Heart right ventricle (tissue), 16 donors: ENCODE measurements at regions of chr6 and their contacts with region 1.

Region 1: GRCh38 chr6:125966569-125966968 is 10.0 kb downstream of the HINT3 start:
- DNase-seq: no peak
- ATAC-seq: no peak
- H3K4me3 ChIP-seq: no peak overlapping the region
- H3K27ac ChIP-seq: no peak overlapping the region
- H3K4me1 ChIP-seq: peaks cover 0 to 4% (median 0%) of the 10 kb centered on the region in 9 donors
- H3K27me3 ChIP-seq: no peaks in the 10 kb centered on the region
- CTCF ChIP-seq: no peak

Region 2: GRCh38 chr6:125307150-125307838 is 659.3 kb before region 1 on chr6:
- intact Hi-C with region 1: loop called in 7 of 10 experiments (anchors 5 to 10 kb)
- DNase-seq: no peak
- ATAC-seq: no peak
- H3K4me3 ChIP-seq: no peak overlapping the region
- H3K27ac ChIP-seq: no peak overlapping the region
- H3K4me1 ChIP-seq: peaks cover 0 to 4% (median 0%) of the 10 kb centered on the region in 9 donors
- H3K27me3 ChIP-seq: peaks cover 0 to 9% (median 0%) of the 10 kb centered on the region in 7 donors
- CTCF ChIP-seq: no peak

Region 3: GRCh38 chr6:125858427-125859320 is 107.9 kb before region 1 on chr6:
- intact Hi-C with region 1: loop called in 2 of 10 experiments (anchors 5 kb)
- DNase-seq: peak in 1 of 2 donors; percentile 53
- ATAC-seq: peak in 7 of 8 donors; percentile 75 to 90 (median 85)
- H3K4me3 ChIP-seq: no peak overlapping the region
- H3K27ac ChIP-seq: no peak overlapping the region
- H3K4me1 ChIP-seq: peaks cover 0 to 6% (median 2%) of the 10 kb centered on the region in 9 donors
- H3K27me3 ChIP-seq: no peaks in the 10 kb centered on the region
- CTCF ChIP-seq: peak; percentile 26 to 79 (median 68)

Region 4: DNA sequence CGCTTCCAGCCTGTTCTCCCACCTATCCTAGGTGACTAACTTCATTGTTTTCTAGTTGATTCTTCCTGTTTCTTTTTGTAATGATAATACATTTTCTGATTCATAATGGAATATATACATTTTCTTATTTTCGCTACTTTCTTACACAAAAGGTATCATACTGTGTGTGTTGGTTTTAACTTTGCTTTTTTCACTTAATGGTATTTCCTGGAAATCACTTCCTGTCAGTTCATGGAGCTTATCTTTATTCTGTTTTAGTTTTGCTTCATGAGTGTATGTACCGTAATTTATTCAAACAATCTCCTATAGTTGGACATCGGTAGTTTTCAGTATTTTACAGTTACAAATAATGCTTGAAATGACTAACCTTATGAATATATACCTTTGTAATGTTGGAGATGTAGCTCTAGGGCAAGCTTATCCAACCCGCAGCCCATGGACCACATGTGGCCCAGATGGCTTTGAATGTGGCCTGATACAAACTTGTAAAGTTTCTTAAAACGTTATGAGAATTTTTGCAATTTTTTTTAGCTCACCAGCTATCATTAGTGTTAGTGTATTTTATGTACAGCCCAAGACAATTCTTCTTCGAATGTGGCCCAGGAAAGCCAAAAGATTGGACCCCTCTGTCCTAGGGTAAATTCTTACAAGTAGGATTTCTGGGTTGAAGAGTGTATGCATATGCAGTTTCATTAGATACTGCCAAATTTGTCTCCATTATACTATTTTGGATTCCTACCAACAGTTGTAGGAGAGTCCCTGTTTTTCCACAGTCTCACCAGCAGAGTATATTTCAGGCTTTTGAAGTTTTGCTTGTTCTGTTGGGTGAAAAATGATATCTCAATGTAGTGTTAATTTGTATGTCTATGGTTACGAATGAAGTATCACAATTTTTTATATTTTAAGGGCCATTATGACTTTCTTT is 36.4 kb after region 1 on chr6:
- intact Hi-C with region 1: no loop called
- DNase-seq: no peak
- ATAC-seq: no peak
- H3K4me3 ChIP-seq: no peak overlapping the region
- H3K27ac ChIP-seq: no peak overlapping the region
- H3K4me1 ChIP-seq: no peaks in the 10 kb centered on the region
- H3K27me3 ChIP-seq: no peaks in the 10 kb centered on the region
- CTCF ChIP-seq: no peak

Region 5: DNA sequence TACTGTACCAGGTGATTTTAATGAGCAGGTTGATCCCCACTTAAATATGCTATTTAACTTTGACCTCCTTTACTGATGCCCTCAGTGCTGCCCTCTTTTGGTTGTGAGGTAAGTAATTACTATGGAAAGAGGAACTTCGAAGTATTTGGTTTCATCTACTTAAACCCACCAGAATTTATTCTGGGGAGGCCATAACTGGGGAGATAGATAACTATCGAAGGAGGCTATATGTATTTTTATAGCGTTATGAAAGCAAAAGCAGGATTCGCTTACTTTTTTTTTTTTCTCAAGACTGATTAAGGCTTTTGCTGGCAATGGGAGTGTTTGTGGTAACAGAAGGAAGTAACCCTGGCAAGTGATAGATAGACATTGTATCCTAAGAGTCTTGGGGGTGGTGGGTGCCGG is 204.4 kb after region 1 on chr6:
- intact Hi-C with region 1: no loop called
- DNase-seq: no peak
- ATAC-seq: no peak
- H3K4me3 ChIP-seq: no peak overlapping the region
- H3K27ac ChIP-seq: no peak overlapping the region
- H3K4me1 ChIP-seq: peaks cover 0 to 6% (median 0%) of the 10 kb centered on the region in 9 donors
- H3K27me3 ChIP-seq: peaks cover 0 to 20% (median 0%) of the 10 kb centered on the region in 7 donors
- CTCF ChIP-seq: peak in 7 of 9 donors; percentile 15 to 52 (median 36)

Region 6: DNA sequence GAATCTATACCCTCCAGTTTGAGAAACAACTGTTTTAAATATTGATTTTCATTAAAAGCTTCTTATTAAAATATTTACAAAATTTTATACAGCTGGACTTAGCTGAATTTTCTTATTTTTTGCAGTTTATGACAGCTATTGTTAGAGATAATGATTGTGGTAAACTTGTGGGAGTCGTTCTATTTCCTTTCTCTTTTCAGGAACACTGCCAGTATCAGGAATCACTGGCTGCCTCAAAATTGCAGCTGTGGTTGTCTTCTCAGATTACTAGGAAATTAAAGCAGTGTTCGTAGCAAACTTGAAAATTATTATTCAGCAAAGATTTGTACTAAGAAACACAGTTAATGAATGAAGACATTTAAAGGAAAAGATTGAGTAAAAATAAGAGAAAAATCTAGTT is 684.4 kb after region 1 on chr6:
- intact Hi-C with region 1: no loop called
- DNase-seq: no peak
- ATAC-seq: no peak
- H3K4me3 ChIP-seq: no peak overlapping the region
- H3K27ac ChIP-seq: no peak overlapping the region
- H3K4me1 ChIP-seq: no peaks in the 10 kb centered on the region
- H3K27me3 ChIP-seq: no peaks in the 10 kb centered on the region
- CTCF ChIP-seq: no peak

Region 7: DNA sequence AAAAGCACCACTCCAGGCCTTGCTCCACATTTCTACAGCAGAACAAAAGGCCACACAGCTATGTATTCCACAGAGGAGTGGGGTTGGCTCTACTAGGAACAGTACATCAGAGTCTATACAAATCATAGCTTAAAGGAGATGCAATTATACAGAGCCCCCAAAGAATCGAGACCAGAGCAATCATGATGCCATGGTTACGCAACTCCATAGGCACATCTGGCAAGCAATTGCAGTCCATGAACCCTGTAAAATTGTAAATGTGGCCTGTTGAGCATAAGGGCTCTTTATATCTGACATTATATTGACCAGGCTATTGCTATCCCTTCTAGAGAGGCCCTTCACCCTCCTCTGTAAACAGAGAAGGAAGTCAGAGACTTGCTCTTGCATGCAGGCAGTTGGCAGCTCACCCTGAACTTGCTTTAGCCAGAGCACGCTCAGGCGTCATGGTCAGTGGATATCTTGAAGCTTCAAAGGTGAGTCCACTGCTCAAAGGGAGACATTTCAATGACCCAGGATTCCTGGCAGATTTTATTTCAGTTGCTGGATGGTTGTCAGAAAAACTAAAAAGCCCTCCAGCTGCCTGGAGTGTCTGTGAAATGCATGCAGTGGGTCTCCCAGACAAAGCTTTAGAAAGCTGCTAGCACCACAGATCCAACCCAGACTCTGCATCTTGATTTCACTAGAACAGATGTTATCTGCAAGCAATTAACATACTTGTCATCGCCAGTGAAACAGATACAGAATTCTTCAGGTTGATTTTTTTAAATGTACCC is 730.5 kb after region 1 on chr6:
- intact Hi-C with region 1: no loop called
- DNase-seq: no peak
- ATAC-seq: no peak
- H3K4me3 ChIP-seq: no peak overlapping the region
- H3K27ac ChIP-seq: no peak overlapping the region
- H3K4me1 ChIP-seq: no peaks in the 10 kb centered on the region
- H3K27me3 ChIP-seq: no peaks in the 10 kb centered on the region
- CTCF ChIP-seq: no peak